ENCODE measurements at regions of chr18 and their contacts with region 1.

Region 1: DNA sequence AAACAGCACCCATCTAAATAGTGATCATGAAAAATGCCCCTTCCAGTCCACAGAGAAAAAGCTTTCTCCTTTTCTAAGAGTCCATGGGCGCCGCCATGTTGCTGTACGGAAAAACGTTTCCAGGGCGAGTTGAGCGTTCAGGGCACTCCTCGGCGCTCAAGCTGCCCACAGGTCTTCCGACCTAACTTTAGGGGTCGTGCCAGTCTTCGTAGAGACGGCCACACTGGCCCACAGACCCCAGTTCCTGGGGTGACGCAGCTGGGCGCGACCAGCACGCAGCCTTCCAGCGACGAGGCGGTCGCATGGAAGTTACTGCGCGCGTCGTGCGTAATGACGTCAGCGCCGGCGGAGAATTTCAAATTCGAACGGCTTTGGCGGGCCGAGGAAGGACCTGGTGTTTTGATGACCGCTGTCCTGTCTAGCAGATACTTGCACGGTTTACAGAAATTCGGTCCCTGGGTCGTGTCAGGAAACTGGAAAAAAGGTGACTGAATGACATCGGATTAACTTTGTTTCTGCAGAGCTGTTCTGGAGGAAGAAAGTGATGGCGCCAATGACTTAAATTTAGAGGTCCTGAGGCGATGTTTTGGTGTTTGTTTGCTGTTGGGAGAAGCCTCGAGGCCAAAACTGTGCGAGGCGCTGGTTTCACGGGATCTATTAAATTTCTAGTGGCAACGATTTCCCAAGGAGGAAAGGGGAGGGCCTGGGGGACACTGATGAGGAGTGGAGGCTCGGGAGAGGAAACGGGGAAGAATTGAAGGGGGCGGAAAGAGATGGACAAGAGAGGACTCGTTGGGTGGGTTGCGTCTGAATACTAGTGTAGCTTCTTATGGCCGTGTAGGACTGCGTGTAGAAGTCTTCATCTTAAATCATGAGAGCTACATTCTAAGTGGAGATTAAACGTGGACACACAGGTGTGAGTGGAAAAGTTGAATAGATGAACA is at the starts of genes METTL4 and NDC80:
- DNase-seq: peak; percentile 79 to 89
- ATAC-seq: peak; percentile 91
- total RNA-seq, gene METTL4: 9.1 to 11.4 TPM
- total RNA-seq, gene NDC80: 3.2 to 5.8 TPM

Region 2: DNA sequence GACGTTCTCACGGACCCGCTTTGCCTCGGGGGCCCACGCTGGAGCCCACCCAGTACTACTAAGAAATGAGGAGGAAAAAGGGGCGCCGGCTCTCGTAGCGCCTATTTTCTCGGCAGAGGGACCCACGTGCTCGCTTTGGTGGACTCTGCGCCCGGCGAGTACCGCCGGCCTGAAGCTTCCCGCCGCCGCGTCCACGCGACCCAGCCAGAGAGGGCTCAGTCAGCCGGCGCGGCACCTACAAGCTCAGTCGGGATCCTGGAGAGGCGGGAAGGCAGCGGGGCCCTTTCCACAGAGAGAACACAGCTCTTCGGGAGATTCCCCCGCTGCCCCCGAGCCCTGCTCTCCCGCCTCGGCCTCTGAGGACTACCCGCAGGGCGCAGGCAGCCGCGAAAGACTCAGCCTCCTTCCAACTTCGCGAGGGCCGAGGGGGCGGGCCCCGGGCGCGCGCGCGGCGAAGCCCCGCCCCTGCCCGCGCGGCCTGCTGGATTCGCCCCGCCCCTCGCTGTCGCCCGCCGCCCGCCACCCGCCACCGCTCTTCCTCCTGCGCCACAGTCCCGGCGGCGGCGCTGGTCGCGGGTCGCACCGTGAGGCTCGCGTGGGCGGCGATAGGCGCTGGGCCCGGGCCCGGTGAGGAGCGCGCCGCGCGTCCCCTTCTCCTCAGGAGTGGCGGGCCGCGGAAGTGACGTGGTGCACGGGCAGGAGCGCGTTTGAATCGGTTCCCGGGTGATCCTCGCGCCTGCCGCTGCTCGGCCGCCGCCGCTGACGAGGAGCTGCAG is 83.9 kb after region 1 on chr18 and contains the start of gene SMCHD1:
- intact Hi-C with region 1: loop called in 1 of 2 experiments (anchors 10 kb)
- DNase-seq: peak; percentile 82 to 92
- ATAC-seq: peak; percentile 75
- total RNA-seq, gene SMCHD1: 46.5 to 62.0 TPM

Measured in left colon (tissue), 2 donors.